Panc1 (cell line): ENCODE measurements at regions of chr10 and their contacts with region 1.

Region 1: DNA sequence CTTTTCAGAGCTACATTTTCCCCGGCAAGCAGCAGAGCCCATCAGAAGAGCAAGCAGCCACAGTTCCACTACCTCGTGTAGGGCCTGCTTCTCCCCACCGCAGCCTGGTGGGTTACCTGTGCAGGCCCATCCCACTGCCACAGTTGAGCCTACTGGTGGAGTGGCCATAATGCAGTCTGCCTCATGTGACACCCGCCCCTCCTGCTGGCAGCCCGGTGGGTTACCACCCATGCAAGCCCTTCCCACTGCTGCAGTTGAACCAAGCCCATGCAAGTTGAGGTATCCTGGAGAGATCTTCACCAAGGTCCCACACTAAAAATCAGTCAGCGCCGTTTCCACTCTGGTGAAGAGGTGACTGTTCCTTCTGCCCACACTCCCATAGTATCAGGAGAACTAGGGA is 32.1 kb upstream of the CNNM1 start:
- DNase-seq: no peak
- ATAC-seq: peak; percentile 71
- H3K4me3 ChIP-seq: no peak overlapping the region
- H3K27ac ChIP-seq: no peak overlapping the region
- H3K4me1 ChIP-seq: no peaks in the 10 kb centered on the region
- H3K27me3 ChIP-seq: no peaks in the 10 kb centered on the region; the same call in 1 of the 2 replicates
- CTCF ChIP-seq: no peak

Region 2: GRCh38 chr10:99364125-99364524 is 67.1 kb after region 1 on chr10:
- CTCF ChIA-PET with region 1: no interaction called
- POLR2A ChIA-PET with region 1: interaction called, 13 read pairs
- in situ Hi-C with region 1: no loop called
- intact Hi-C with region 1: no loop called
- DNase-seq: no peak
- ATAC-seq: no peak
- H3K4me3 ChIP-seq: no peak overlapping the region
- H3K27ac ChIP-seq: no peak overlapping the region
- H3K4me1 ChIP-seq: no peaks in the 10 kb centered on the region
- H3K27me3 ChIP-seq: no peaks in the 10 kb centered on the region
- CTCF ChIP-seq: no peak